Naive thymus-derived CD8-positive, alpha-beta T cell (primary cell): ENCODE measurements at regions of chr16 and their contacts with region 1.

Region 1: GRCh38 chr16:11689031-11689761 is 20.9 kb downstream of the SNN start:
- DNase-seq: no peak
- ATAC-seq: peak; percentile 33 to 39
- H3K4me3 Mint-ChIP-seq: peak overlapping the region in 4 of 10 donors; percentile 13 to 58 (median 23)
- H3K27ac Mint-ChIP-seq: peak overlapping the region in 7 of 10 donors; percentile 19 to 82 (median 43)
- H3K4me1 Mint-ChIP-seq: peaks cover 4 to 54% (median 17%) of the 10 kb centered on the region in 4 donors
- H3K27me3 Mint-ChIP-seq: no peaks in the 10 kb centered on the region

Region 2: DNA sequence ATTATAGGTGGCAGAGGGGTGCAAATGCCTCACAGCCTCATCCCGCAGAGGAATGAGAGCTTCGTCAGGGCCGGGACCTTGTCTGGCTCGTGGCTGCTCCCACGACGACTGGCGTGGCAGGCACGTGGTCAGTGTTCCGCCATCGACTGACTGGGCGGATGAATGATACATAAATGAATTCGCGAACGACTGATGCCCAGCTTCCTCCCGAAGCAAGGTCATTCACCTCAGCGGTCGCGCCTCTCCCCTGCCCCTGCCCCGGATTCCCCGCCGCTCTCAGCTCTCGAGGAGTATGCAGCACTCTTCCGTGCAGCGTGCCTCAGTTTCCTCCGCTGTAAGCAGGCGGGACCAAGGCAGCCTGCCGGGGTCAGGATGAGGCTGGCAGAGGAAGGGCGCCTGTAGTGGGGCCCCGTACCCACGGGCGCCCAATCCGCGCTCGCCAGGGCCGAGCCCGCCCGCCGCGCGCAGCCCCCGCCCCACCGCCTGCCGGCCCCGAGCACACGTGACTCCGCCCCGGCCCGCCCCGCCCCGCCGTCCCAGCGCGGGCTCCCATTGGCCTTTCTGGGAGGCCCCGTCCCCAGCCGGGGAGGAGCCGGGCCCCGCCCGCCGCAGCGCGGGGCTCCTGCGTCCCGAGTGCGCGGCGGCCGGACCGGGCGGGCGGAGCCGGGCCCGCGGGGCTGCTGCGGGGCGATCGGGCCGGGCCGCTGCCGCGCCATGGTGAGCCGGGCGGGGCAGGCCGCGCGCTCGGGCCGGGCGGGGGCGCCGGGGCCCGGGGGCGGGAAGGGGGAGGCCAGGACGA is 21.2 kb before region 1 on chr16 and contains the start of gene SNN:
- POLR2A ChIA-PET with region 1: interaction called, 13 read pairs
- DNase-seq: peak; percentile 73 to 90 (median 82)
- ATAC-seq: peak; percentile 76 to 80
- H3K4me3 Mint-ChIP-seq: peak within 1 kb of the TSS; percentile 81 to 95 (median 90)
- H3K27ac Mint-ChIP-seq: peak within 1 kb of the TSS; percentile 51 to 98 (median 97)
- H3K4me1 Mint-ChIP-seq: peaks cover 44 to 83% (median 78%) of the 10 kb centered on the region in 4 donors
- H3K27me3 Mint-ChIP-seq: no peaks in the 10 kb centered on the region
- polyA plus RNA-seq, gene SNN: 16.0 to 26.9 (median 19.0) TPM